HepG2 (cell line): ENCODE measurements at regions of chr2 and their contacts with region 1.

Region 1: GRCh38 chr2:168346725-168347477 is 99.5 kb upstream of the STK39 start:
- DNase-seq: peak; percentile 62
- ATAC-seq: peak; percentile 86
- H3K4me3 ChIP-seq: peak overlapping the region; percentile 57 to 77 (median 74)
- H3K27ac ChIP-seq: no peak overlapping the region
- H3K4me1 ChIP-seq: peaks cover 7% of the 10 kb centered on the region
- H3K27me3 ChIP-seq: 0 out of 5 replicates have a peak, but pooled peaks cover 0 to under 1% of the 10 kb centered on the region in 2 experiments
- CTCF ChIP-seq: peak; percentile 90
- EP300 ChIP-seq: no peak
- POLR2A ChIP-seq: no peak
- RAD21 ChIP-seq: peak; percentile 91

Region 2: DNA sequence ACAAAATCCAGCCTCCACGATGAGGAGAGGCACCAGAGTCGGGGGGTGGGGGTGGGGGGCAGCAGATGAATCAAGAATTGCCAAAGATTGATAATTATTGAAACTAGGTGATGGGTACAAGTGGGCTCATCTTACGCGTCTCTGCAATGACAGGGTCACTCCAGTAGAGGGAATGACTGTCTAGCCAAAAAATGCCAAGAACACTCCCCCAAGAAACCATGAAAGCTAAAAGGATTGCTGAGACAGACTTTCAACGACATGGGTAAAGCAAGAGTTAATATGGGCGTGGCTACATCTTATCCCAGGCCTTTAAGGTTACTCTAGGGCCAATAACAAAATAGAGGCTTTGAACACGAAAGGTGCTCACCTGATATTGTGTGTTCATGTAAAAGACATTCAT is 186.0 kb before region 1 on chr2:
- CTCF ChIA-PET with region 1: no interaction called
- POLR2A ChIA-PET with region 1: no interaction called
- in situ Hi-C with region 1: no loop called
- intact Hi-C with region 1: no loop called
- DNase-seq: peak; percentile 60
- ATAC-seq: peak; percentile 67
- H3K4me3 ChIP-seq: no peak overlapping the region
- H3K27ac ChIP-seq: no peak overlapping the region
- H3K4me1 ChIP-seq: peaks cover 10% of the 10 kb centered on the region
- H3K27me3 ChIP-seq: no peaks in the 10 kb centered on the region
- CTCF ChIP-seq: peak; percentile 57
- EP300 ChIP-seq: no peak
- POLR2A ChIP-seq: no peak
- RAD21 ChIP-seq: peak; percentile 79

Region 3: DNA sequence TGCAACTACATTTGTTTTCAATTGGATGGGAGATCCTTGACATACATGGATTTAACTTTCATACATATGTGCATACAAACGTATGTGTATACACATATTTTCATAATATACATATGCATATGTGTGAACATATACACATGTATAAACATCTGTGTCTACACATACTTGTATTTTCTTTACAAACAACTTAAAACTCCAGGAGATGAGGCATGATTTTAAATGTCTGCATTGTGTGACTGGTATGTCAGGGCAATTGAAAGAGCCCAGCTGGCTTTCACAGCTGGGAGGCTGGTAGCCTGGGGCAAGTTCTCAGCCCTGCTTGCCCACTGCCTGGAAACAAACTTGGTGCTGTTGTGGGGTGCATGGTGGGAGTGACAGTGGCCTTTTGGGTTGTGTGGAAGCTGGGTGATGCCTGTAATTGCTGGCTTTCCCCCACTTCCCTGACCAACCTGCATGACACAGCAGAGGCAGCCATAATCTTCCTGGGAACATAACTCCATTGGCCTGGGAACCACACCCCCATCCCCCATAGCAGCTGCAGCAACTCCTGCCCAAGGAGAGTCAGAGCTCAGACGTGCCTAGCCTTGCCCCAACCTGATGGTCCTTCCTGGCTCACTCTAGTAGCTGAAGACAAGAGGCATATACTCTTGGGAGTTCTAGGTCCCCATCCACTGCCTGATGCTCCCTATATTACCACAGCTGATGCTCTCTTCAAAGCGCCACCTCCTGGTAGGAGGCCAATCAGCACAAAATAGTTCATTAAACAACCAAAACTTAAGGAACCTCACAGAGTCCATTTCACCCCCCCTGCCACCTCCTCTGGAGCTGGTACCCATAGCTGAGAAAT is 267.5 kb after region 1 on chr2:
- CTCF ChIA-PET with region 1: interaction called, 4 read pairs
- POLR2A ChIA-PET with region 1: no interaction called
- in situ Hi-C with region 1: no loop called
- intact Hi-C with region 1: loop called (anchors 1 kb)
- DNase-seq: no peak
- ATAC-seq: peak; percentile 59
- H3K4me3 ChIP-seq: no peak overlapping the region
- H3K27ac ChIP-seq: no peak overlapping the region
- H3K4me1 ChIP-seq: peaks cover 4% of the 10 kb centered on the region
- H3K27me3 ChIP-seq: no peaks in the 10 kb centered on the region
- CTCF ChIP-seq: peak; percentile 48
- EP300 ChIP-seq: no peak
- POLR2A ChIP-seq: no peak
- RAD21 ChIP-seq: no peak

Region 4: DNA sequence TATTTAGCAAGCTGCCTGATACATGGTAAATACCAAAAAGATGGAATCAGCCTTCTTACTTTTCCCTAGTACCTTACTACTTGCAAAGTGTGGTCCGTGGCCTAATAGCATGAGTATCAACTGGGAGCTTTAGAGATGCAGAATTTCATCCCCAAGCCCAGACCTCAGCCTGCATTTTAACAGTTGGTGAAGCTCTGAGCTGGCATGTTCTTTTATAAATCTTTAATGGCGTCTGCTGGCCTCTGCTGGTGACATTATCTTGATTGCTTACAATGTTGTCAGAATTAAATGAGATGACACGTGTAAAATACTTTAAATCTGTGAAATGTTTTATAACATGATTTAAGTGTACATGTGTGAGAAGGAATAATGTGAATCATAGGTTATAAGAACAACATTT is 340.4 kb after region 1 on chr2:
- CTCF ChIA-PET with region 1: interaction called, 8 read pairs
- POLR2A ChIA-PET with region 1: no interaction called
- in situ Hi-C with region 1: no loop called
- intact Hi-C with region 1: loop called (anchors 1 kb)
- DNase-seq: no peak
- ATAC-seq: no peak
- H3K4me3 ChIP-seq: no peak overlapping the region
- H3K27ac ChIP-seq: no peak overlapping the region
- H3K4me1 ChIP-seq: peaks cover 15% of the 10 kb centered on the region
- H3K27me3 ChIP-seq: no peaks in the 10 kb centered on the region
- CTCF ChIP-seq: peak; percentile 26; the same call in 1 of the 2 replicates
- EP300 ChIP-seq: no peak
- POLR2A ChIP-seq: no peak
- RAD21 ChIP-seq: no peak

Region 5: GRCh38 chr2:168758970-168759820 is 412.3 kb after region 1 on chr2:
- CTCF ChIA-PET with region 1: interaction called, 62 read pairs
- POLR2A ChIA-PET with region 1: no interaction called
- in situ Hi-C with region 1: loop called (anchors 5 kb)
- intact Hi-C with region 1: loop called (anchors 1 kb)
- DNase-seq: peak; percentile 64
- ATAC-seq: peak; percentile 95
- H3K4me3 ChIP-seq: no peak overlapping the region
- H3K27ac ChIP-seq: no peak overlapping the region
- H3K4me1 ChIP-seq: peaks cover 5% of the 10 kb centered on the region; the same call in 1 of the 2 replicates
- H3K27me3 ChIP-seq: no peaks in the 10 kb centered on the region
- CTCF ChIP-seq: peak; percentile 77
- EP300 ChIP-seq: no peak
- POLR2A ChIP-seq: no peak
- RAD21 ChIP-seq: peak; percentile 61; the same call in 1 of the 2 replicates

Region 6: GRCh38 chr2:168920504-168921157 is 573.7 kb after region 1 on chr2:
- CTCF ChIA-PET with region 1: interaction called, 36 read pairs
- POLR2A ChIA-PET with region 1: no interaction called
- in situ Hi-C with region 1: loop called (anchors 5 kb)
- intact Hi-C with region 1: loop called (anchors 1 kb)
- DNase-seq: peak; percentile 34
- ATAC-seq: peak; percentile 45; the same call in 1 of the 3 replicates
- H3K4me3 ChIP-seq: no peak overlapping the region
- H3K27ac ChIP-seq: no peak overlapping the region
- H3K4me1 ChIP-seq: no peaks in the 10 kb centered on the region
- H3K27me3 ChIP-seq: peaks cover 0 to 8% of the 10 kb centered on the region in 2 experiments; a peak in 2 of 5 replicates
- CTCF ChIP-seq: peak; percentile 73
- EP300 ChIP-seq: no peak
- POLR2A ChIP-seq: no peak
- RAD21 ChIP-seq: 0 out of 2 replicates have a peak, but pooled peaks have one; percentile 22